ENCODE measurements at regions of chr10 and their contacts with region 1.

Region 1: DNA sequence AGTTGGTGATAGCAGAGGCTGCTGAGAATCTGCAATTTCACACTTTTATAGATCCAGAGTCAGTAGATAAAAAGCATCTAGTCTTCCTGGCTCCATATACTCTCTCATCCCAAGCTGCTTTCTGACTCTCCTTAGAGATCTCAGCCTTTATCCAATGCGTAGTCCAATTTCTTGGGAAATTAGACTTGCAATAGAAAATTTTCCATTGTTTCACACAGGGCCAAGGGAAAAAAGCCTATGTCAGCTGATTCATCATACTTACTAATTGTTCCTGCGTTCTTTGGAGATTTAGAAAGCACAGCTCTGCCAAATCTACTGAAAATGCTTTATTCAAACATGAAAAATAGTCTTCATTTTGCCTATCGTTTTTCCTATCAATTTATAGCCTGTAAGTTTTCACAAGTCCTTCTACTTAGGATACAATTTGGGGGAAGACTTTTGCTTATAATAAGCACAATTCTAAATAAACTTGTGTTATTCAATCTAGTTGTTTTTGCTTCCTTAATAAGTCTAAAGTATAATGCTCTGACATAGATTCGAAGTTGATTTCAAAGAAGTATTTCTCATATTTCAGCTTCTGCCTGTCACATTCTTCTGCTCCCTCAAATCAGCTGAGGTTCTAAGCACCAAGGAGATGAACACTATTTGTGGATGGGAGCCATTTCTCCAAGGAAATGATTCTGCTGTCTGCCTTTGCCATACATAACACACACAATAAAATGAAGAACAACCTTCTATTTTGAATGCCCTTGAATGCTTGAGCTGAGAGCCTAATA is 165.4 kb downstream of the ADAM12 start:
- DNase-seq: no peak
- H3K4me3 ChIP-seq: no peak overlapping the region
- H3K4me3 Mint-ChIP-seq: no peak overlapping the region
- H3K27ac Mint-ChIP-seq: no peak overlapping the region
- H3K4me1 ChIP-seq: no peaks in the 10 kb centered on the region
- H3K4me1 Mint-ChIP-seq: no peaks in the 10 kb centered on the region
- H3K27me3 ChIP-seq: no peaks in the 10 kb centered on the region; the same call in 1 of the 2 replicates
- H3K27me3 Mint-ChIP-seq: no peaks in the 10 kb centered on the region
- CTCF ChIP-seq: no peak

Region 2: DNA sequence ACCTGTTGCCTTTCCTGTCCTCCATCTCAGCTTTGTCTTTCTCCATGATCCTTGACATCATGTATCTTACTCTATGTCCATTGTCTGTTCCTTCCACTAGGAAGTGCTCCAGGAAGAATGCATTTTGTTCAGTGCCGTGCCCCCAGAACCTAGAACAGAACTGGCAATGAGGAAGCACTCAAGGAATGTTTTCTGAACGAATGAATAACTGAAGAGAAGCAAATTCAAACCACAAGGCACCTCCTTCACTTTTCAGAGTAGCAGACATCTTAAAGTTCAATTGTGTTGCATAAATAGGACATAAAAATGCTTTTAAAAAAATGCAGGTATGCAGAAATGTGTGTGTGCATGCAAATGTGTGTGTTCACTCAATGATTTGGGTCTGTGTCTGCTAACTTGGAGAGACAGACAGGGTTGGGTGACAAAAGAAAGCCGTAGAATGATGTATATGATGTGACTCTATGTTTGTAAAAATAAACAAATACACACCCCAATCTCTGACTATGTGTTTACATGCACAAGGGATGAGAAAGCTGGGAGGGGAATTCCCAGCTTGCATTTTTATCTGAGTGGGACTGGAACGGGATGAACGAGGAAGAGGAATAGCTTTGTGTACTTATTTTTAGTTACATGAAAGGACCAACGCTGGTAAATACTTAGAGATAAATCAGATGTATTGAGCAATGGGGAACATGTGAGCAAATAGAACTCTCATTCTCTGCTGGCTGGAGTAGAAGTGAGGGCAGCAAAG is 88.8 kb before region 1 on chr10:
- CTCF ChIA-PET with region 1: no interaction called
- POLR2A ChIA-PET with region 1: no interaction called
- intact Hi-C with region 1: no loop called
- DNase-seq: no peak
- H3K4me3 ChIP-seq: no peak overlapping the region
- H3K4me3 Mint-ChIP-seq: no peak overlapping the region
- H3K27ac Mint-ChIP-seq: no peak overlapping the region
- H3K4me1 ChIP-seq: no peaks in the 10 kb centered on the region; the same call in 1 of the 2 replicates
- H3K4me1 Mint-ChIP-seq: peaks cover 11% of the 10 kb centered on the region
- H3K27me3 ChIP-seq: no peaks in the 10 kb centered on the region
- H3K27me3 Mint-ChIP-seq: peaks cover 6% of the 10 kb centered on the region
- CTCF ChIP-seq: no peak

Region 3: DNA sequence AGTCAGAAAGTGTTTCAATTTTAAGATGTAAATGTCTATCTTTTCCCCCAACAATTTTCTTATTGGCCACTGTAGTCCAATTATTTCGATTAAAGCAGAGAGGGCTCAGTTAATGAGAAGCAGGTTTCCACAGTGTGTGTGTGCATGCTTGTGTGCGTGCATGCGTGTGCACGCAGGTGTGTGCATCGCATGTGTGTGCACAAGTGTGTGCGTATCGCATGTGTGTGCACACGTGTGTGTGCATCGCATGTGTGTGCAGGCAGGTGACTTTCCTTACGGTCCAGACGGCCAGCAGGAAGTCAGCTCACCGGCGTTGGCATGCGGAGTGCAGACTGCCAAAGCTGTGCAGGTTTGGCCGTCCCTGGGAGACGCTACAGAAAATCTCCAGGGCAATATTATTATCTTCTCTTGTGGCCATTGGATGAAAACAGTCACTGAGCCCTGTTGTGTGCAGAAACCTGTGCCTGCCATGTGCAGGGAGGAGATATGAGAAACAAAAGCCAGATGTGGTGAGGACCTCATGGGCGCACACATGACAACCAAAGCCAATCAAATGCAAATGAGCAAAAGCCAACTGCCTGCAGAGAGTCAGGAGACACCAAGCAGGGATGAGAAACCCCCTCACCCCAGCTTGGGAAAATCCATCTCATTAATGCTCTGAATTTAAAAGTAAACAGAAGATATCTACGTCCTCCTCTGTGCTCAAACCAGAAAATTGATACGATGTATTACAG is 377.2 kb after region 1 on chr10:
- CTCF ChIA-PET with region 1: no interaction called
- POLR2A ChIA-PET with region 1: no interaction called
- intact Hi-C with region 1: no loop called
- DNase-seq: no peak
- H3K4me3 ChIP-seq: no peak overlapping the region
- H3K4me3 Mint-ChIP-seq: no peak overlapping the region
- H3K27ac Mint-ChIP-seq: no peak overlapping the region
- H3K4me1 ChIP-seq: no peaks in the 10 kb centered on the region
- H3K4me1 Mint-ChIP-seq: no peaks in the 10 kb centered on the region
- H3K27me3 ChIP-seq: no peaks in the 10 kb centered on the region
- H3K27me3 Mint-ChIP-seq: peaks cover 8% of the 10 kb centered on the region
- CTCF ChIP-seq: no peak

Region 4: GRCh38 chr10:127174866-127175265 is 951.9 kb after region 1 on chr10:
- CTCF ChIA-PET with region 1: no interaction called
- POLR2A ChIA-PET with region 1: no interaction called
- intact Hi-C with region 1: loop called (anchors 5 kb)
- DNase-seq: no peak
- H3K4me3 ChIP-seq: no peak overlapping the region
- H3K4me3 Mint-ChIP-seq: no peak overlapping the region
- H3K27ac Mint-ChIP-seq: no peak overlapping the region
- H3K4me1 ChIP-seq: no peaks in the 10 kb centered on the region
- H3K4me1 Mint-ChIP-seq: no peaks in the 10 kb centered on the region
- H3K27me3 ChIP-seq: no peaks in the 10 kb centered on the region
- H3K27me3 Mint-ChIP-seq: no peaks in the 10 kb centered on the region
- CTCF ChIP-seq: no peak